BJ (cell line): ENCODE measurements at regions of chr2 and their contacts with region 1.

Region 1: DNA sequence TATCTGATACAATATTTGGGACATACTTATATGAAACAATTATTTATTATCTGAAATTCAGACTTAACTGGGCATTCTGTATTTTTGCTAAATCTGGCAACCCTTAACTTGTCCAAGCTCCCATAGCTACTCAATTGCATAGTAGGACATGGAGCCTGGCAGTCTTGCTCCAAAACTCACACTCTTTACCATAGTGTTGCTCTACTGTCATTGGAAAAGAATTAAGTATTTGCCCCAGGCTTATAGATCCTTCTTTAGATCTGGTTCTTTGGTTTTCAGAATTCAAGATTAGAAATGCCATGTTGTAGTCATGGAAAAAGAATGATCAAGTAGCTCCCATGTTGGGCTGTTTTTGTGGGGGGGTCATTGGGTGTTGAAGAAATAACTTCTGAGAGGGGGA is 241.0 kb downstream of the WDPCP start:
- DNase-seq: no peak
- H3K4me3 ChIP-seq: no peak overlapping the region
- H3K27me3 ChIP-seq: no peaks in the 10 kb centered on the region
- CTCF ChIP-seq: no peak

Region 2: DNA sequence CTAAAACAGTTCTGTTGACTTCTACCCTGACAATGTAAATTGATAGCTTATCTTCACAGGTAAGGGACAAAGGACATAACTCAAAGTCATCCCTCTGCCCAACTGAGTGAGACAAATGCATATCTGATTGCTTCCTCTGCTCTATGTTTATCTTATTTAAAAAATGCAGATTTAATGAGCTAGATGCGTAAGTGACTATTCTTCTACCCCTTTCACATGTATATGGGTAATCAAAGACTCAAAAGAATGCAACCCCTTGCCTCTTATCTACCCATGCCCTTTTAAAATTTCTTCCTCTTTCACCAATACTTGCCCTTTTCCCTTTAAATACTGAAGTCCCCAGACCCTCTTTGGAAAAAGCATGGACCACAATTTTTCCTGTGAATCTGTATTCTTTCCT is 12.4 kb before region 1 on chr2:
- CTCF ChIA-PET with region 1: no interaction called
- POLR2A ChIA-PET with region 1: interaction called, 11 read pairs
- DNase-seq: no peak
- H3K4me3 ChIP-seq: no peak overlapping the region
- H3K27me3 ChIP-seq: no peaks in the 10 kb centered on the region
- CTCF ChIP-seq: no peak

Region 3: GRCh38 chr2:63477686-63478085 is 130.4 kb after region 1 on chr2:
- CTCF ChIA-PET with region 1: no interaction called
- POLR2A ChIA-PET with region 1: no interaction called
- DNase-seq: no peak
- H3K4me3 ChIP-seq: no peak overlapping the region
- H3K27me3 ChIP-seq: no peaks in the 10 kb centered on the region
- CTCF ChIP-seq: no peak